ENCODE measurements at regions of chr1 and their contacts with region 1.

Region 1: GRCh38 chr1:52404116-52404986 is at the starts of genes ORC1 and PRPF38A:
- DNase-seq: peak; percentile 97
- total RNA-seq, gene ORC1: 0.11 TPM
- total RNA-seq, gene PRPF38A: 20.9 TPM

Region 2: GRCh38 chr1:52365746-52366516 is 38.4 kb before region 1 on chr1 and contains the start of gene CC2D1B:
- intact Hi-C with region 1: loop called (anchors 2 kb)
- DNase-seq: peak; percentile 99
- total RNA-seq, gene CC2D1B: 19.5 TPM

Region 3: GRCh38 chr1:52552505-52553361 is 148.4 kb after region 1 on chr1 and contains the start of gene TUT4:
- intact Hi-C with region 1: loop called (anchors 2 kb)
- DNase-seq: peak; percentile 91
- total RNA-seq, gene TUT4: 37.1 TPM

Region 4: GRCh38 chr1:52601991-52602855 is 197.9 kb after region 1 on chr1 and contains the start of gene GPX7:
- intact Hi-C with region 1: loop called (anchors 5 kb)
- DNase-seq: peak; percentile 79
- total RNA-seq, gene GPX7: 12.7 TPM

Region 5: GRCh38 chr1:52683367-52683940 is 279.1 kb after region 1 on chr1:
- intact Hi-C with region 1: loop called (anchors 10 kb)
- DNase-seq: no peak

Region 6: GRCh38 chr1:52927212-52928014 is 523.1 kb after region 1 on chr1 and contains the start of gene SCP2:
- intact Hi-C with region 1: loop called (anchors 5 kb)
- DNase-seq: peak; percentile 91
- total RNA-seq, gene SCP2: 124 TPM

Measured in cardiac septum (tissue), 1 donor.